Ascending aorta (tissue), 2 donors: ENCODE measurements at regions of chr5 and their contacts with region 1.

Region 1: DNA sequence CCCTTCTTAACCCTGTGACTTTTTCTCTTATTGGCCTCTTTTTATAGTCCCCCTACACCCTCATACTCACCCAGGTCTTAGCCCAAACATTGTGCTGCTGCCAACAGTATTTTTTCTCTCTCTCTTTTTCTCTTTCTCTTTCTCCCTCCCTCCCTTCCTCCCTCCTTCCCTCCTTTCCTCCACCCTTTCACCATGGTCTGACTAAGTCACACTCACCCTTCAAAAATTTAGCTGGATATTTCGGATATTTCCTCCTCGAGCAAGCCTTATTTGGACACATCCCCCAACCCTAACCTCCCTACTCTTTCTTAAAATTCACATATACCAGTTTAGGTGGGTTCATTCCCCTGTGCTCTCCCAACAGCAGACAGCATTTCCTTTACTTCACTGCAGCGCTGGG is 64.7 kb downstream of the FGF1 start:
- DNase-seq: no peak
- H3K4me3 ChIP-seq: peak overlapping the region in 1 of 2 donors; percentile 35
- H3K27ac ChIP-seq: peak overlapping the region; percentile 67 to 83
- H3K4me1 ChIP-seq: peaks cover 7 to 19% of the 10 kb centered on the region in 2 donors
- H3K27me3 ChIP-seq: no peaks in the 10 kb centered on the region
- CTCF ChIP-seq: no peak

Region 2: DNA sequence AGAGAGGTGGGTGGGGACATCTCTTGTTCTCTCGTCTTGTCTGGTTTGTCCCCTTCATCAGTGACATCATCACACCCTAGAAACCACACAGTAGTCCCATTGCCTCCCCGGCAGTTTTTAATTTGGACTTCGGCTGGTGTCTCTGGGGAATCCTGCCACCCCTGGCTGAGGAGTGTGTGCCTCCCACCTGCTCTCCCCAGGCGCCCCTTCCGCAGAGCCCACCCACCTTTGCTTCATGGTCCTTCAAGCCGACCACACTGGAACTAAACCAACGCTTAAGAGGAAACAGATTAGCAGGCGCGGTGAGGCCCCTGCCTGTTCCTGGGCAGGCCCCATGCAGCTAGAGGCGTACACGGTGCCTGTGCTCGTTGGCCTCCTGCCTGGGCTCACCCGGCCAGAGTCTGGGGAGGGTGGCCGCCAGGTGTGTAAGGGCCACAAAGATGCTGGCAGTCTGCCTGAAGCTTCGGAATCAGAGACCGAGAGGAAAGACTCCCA is 188.8 kb before region 1 on chr5:
- intact Hi-C with region 1: no loop called
- DNase-seq: no peak
- H3K4me3 ChIP-seq: no peak overlapping the region
- H3K27ac ChIP-seq: no peak overlapping the region
- H3K4me1 ChIP-seq: no peaks in the 10 kb centered on the region
- H3K27me3 ChIP-seq: no peaks in the 10 kb centered on the region
- CTCF ChIP-seq: no peak

Region 3: DNA sequence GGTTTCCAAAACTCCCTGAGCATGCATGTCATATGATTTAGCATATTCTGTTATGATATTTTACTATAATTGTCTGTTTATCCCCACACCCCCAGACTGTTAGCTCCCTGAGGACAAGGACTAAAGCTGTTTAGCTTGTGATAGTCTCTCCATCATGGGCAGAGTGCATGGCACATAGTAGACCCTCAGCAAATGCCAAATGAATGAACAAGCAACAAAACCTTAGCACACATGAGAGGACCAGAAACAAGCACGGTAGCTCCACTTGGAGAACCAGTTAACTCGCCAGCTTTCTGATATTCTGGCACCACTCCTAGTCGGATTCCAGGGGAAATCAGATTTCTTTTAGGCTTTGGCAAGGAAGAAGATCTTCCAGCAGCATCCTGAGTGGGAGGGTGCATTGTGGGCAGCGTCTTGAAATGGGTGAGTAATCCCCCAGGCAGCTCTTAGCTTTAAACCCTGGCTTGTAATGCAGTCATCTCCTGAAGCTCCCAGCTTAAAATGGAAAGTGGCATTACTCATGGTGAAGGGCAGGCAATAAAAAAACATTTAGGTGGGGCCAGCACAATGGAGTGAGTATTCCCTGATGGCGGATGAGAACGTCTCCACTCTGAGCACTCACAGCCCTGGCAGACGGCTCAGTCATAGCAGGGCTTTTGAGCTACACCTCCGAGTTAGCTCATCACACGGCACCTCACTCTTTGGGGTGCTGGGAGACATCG is 23.6 kb after region 1 on chr5:
- intact Hi-C with region 1: loop called (anchors 1 kb)
- DNase-seq: peak; percentile 12 to 85
- H3K4me3 ChIP-seq: peak overlapping the region in 1 of 2 donors; percentile 38
- H3K27ac ChIP-seq: peak overlapping the region; percentile 74 to 82
- H3K4me1 ChIP-seq: peaks cover 0 to 19% of the 10 kb centered on the region in 2 donors
- H3K27me3 ChIP-seq: no peaks in the 10 kb centered on the region
- CTCF ChIP-seq: no peak

Region 4: GRCh38 chr5:142779163-142779840 is 158.1 kb after region 1 on chr5:
- intact Hi-C with region 1: no loop called
- DNase-seq: no peak
- H3K4me3 ChIP-seq: no peak overlapping the region
- H3K27ac ChIP-seq: no peak overlapping the region
- H3K4me1 ChIP-seq: peaks cover 0 to 28% of the 10 kb centered on the region in 2 donors
- H3K27me3 ChIP-seq: no peaks in the 10 kb centered on the region
- CTCF ChIP-seq: no peak

Region 5: DNA sequence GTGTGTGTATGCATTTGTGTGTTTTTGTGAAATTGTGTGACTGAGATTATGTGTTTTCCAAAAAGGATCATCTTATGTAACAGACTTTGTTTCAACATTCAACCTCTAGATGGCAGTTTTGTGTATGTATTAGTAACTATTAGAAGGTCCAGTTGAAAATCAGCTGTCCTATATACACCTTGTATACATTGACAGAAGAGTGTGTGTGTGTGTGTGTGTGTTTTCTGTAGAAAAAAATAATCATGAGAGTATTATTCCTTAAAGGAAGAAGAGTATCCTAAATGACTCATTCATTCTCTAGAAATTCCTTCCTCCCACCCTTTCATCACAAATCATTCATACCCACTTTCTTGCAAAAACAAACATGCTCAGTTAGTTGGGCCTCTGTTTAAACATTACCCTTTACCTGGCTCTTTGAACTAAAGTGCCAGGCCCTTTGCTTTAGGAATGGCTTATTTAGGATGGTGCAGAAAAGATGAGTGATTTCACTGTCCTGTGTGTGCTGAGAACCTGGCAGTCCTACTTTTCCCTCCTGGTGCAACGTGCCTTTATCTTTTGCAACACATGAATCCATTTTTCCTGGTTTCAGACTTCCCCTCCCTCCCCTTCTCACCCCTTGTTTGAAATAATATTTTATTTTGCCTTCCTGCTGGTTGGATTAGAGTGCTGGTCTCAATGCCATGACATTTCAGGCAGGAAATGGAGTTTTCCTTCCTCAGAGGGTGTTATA is 301.2 kb after region 1 on chr5:
- intact Hi-C with region 1: no loop called
- DNase-seq: no peak
- H3K4me3 ChIP-seq: no peak overlapping the region
- H3K27ac ChIP-seq: no peak overlapping the region
- H3K4me1 ChIP-seq: no peaks in the 10 kb centered on the region
- H3K27me3 ChIP-seq: no peaks in the 10 kb centered on the region
- CTCF ChIP-seq: peak; percentile 28 to 51 (median 34)

Region 6: GRCh38 chr5:143985832-143986485 is 1364.7 kb after region 1 on chr5:
- intact Hi-C with region 1: no loop called
- DNase-seq: no peak
- H3K4me3 ChIP-seq: no peak overlapping the region
- H3K27ac ChIP-seq: peak overlapping the region in 1 of 2 donors; percentile 55
- H3K4me1 ChIP-seq: peaks cover 0 to 10% of the 10 kb centered on the region in 2 donors
- H3K27me3 ChIP-seq: no peaks in the 10 kb centered on the region
- CTCF ChIP-seq: no peak